Activated B cell treated with CpG ODN at 0.5 μM for 24 hours (primary cell): ENCODE measurements at regions of chr1 and their contacts with region 1.

Region 1: DNA sequence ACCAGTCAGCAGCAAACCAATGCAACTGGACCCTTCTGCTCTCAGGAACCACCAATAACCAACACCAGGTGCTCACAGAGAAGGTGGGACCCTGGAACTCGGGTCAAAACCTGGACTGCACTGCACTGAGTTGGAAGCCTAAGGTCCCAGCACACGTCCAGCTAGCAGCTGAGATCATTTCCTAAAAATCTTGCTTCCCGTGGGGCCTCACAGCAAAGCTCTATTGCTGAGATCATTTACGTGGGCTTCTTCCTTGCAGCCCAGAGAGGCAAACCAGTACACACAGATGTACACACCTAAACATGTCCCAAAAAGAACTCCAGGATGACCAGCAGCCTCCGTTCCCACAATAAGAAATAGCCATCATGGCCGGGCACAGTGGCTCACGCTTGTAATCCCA is 22.8 kb upstream of the STMN1 start:
- DNase-seq: no peak
- ATAC-seq: no peak
- H3K4me3 Mint-ChIP-seq: no peak overlapping the region
- H3K27ac Mint-ChIP-seq: no peak overlapping the region
- H3K4me1 Mint-ChIP-seq: no peaks in the 10 kb centered on the region
- H3K27me3 Mint-ChIP-seq: peaks cover 28% of the 10 kb centered on the region
- CTCF ChIP-seq: no peak

Region 2: GRCh38 chr1:25837262-25837875 is 91.6 kb before region 1 on chr1:
- CTCF ChIA-PET with region 1: no interaction called
- POLR2A ChIA-PET with region 1: no interaction called
- intact Hi-C with region 1: no loop called
- DNase-seq: no peak
- ATAC-seq: no peak
- H3K4me3 Mint-ChIP-seq: no peak overlapping the region
- H3K27ac Mint-ChIP-seq: no peak overlapping the region
- H3K4me1 Mint-ChIP-seq: no peaks in the 10 kb centered on the region
- H3K27me3 Mint-ChIP-seq: no peaks in the 10 kb centered on the region
- CTCF ChIP-seq: no peak

Region 3: DNA sequence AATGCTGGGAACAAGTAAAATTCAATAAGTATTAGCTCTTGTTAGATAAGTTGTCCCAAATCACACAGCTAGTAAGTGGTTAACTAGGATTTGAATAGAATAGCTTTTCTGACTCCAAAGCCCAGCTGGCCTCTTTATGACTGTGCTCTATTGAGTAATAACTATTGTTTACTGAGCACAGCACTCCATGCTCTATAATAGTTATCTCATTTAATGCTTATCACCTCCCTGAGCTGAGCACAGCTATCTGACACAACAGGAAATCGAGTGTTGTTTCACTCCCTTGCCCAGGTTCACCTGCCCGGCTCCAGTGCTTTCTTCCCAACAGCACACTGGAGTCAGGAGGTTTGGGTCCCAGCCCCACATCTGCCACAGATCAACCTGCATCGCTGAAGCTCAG is 16.0 kb after region 1 on chr1:
- CTCF ChIA-PET with region 1: no interaction called
- POLR2A ChIA-PET with region 1: interaction called, 13 read pairs
- intact Hi-C with region 1: no loop called
- DNase-seq: no peak
- ATAC-seq: no peak
- H3K4me3 Mint-ChIP-seq: no peak overlapping the region
- H3K27ac Mint-ChIP-seq: no peak overlapping the region
- H3K4me1 Mint-ChIP-seq: no peaks in the 10 kb centered on the region
- H3K27me3 Mint-ChIP-seq: peaks cover 1% of the 10 kb centered on the region
- CTCF ChIP-seq: no peak